SK-N-SH (cell line): ENCODE measurements at regions of chr15 and their contacts with region 1.

Region 1: DNA sequence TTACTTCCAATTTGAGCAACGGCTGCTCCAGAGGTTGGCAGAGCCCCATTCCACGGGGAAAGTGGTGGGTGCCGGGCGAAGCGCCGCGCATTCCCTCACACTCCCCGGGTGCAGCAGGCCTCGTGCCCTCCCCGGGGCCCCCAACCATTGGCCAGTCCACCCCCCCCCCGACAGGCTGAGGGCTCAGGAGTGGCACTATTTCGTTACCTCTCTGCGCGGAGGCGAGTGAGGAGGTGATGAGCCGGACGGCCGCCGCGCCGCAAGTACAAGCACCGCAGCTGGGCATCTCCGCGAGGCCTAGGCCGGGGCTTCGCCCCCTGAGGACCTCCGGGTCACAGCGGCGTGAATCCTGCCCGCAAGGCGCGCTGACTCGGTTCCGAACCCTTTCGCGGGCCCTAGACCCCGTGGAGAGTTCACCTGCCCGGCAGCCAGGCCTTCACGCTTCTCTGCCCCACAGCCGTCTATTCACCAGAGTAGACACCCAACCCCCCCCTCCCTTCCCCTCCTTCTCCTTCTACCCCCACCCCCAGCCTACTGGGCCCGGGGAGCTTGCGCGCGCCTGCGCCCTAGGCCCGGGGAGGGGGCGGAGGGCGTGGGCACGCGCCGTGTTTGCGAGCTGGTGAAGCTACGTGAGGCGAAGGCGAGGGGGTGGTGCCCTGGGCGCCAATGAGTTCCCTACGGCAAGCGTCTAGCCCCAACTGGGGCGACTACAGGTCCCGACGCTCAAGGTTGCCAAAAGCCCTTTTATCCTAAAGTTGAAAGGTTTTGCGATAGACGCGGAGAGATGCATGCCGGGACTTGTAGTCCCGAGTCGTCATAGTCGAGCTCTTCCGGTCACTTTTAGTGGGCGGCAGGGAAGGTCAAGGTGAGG is at the start of gene CLPX:
- DNase-seq: peak; percentile 98
- H3K4me3 ChIP-seq: peak within 1 kb of the TSS; percentile 77 to 87
- H3K27ac ChIP-seq: peak within 1 kb of the TSS; percentile 78 to 89
- H3K4me1 ChIP-seq: peaks cover 0 to 5% of the 10 kb centered on the region in 2 experiments; a peak in 2 of 4 replicates
- H3K27me3 ChIP-seq: no peaks in the 10 kb centered on the region
- CTCF ChIP-seq: no peak
- EP300 ChIP-seq: no peak
- RAD21 ChIP-seq: no peak
- polyA plus RNA-seq, gene CLPX: 12.9 and 17.3 TPM in 2 replicates

Region 2: DNA sequence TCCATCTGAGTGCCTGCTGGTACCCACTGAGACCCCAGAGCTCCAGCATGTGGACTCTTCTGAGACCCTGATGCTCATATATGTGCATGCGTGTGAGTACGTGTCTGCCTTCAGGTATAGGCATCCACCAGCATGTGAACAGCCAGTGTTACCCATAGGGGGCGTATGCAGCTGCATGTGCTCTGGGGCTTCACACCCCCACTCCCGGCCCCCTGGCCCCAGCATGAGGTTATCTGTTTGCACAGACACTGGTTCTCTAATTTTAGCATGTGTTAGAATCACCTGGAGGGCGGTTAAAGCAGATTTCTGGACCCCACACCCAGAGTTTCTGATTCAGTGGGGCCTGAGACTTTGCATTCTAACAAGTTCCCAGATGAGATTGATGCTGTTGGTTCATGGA is 27.0 kb after region 1 on chr15:
- CTCF ChIA-PET with region 1: interaction called, 15 read pairs
- POLR2A ChIA-PET with region 1: interaction called, 3 read pairs
- DNase-seq: peak; percentile 52
- H3K4me3 ChIP-seq: no peak overlapping the region; a peak in 1 of 4 replicates
- H3K27ac ChIP-seq: no peak overlapping the region
- H3K4me1 ChIP-seq: peaks cover 9 to 38% of the 10 kb centered on the region in 2 experiments; a peak in 2 of 4 replicates
- H3K27me3 ChIP-seq: no peaks in the 10 kb centered on the region
- CTCF ChIP-seq: peak; percentile 54
- EP300 ChIP-seq: no peak
- RAD21 ChIP-seq: no peak

Region 3: DNA sequence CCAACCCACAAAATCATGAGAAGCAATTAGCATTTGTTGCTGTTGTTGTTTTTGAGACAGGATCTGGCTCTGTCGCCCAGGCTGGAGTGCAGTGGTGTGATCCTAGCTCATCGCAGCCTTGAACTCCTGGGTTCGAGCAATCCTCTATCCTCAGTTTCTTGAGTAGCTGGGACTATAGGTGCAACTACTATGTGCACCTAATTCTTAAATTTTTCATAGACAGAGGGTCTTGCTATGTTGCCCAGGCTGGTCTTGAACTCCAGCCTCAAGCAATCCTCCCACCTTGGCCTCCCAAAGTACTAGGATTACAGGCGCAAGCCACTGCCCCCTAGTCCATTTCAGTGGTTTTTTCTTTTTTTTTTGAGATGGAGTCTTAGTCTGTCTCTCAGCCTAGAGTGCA is 83.3 kb after region 1 on chr15:
- CTCF ChIA-PET with region 1: interaction called, 63 read pairs
- POLR2A ChIA-PET with region 1: no interaction called
- DNase-seq: no peak
- H3K4me3 ChIP-seq: no peak overlapping the region
- H3K27ac ChIP-seq: no peak overlapping the region
- H3K4me1 ChIP-seq: no peaks in the 10 kb centered on the region; a peak in 1 of 4 replicates
- H3K27me3 ChIP-seq: no peaks in the 10 kb centered on the region
- CTCF ChIP-seq: no peak
- EP300 ChIP-seq: no peak
- RAD21 ChIP-seq: no peak

Region 4: DNA sequence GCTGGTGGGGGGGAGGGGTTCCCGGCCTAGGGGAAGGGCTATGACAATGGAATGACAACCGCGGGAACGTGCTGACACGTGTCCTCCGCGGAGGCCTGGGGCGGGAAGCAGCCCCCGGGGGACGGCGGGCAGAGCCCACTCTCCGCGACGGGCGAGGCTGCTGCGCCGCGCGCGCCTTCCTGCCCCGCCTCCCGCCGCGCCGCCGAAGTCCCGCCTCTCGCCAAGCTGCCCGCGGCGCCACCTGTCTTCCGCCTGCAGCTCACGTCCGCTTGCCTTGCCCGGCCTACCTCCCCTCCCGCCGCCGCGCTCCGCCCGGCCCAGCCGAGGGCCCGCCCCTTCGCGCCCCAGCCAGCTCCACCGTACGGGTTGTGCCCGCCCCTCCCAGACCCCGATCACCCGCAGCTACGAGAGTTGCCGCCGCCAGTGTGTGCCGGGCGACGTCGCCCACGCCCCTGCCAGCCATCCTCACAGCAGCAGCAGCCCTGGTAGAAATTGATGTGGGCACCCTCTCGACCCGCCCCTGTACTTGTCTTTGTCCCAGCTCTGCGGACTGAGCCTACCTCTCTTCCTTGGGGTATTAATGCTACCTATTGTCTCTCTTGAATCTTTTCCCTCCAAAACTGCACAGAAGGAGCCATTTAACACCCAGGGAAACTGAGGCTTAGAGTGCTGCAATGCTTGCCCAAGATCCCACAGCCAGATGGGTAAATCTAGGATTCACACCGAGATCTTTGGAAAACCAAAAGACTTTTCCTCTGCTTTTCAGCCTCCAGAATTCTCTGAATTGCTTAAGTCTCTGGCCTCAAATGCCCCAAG is 101.8 kb after region 1 on chr15 and contains the start of gene PARP16:
- CTCF ChIA-PET with region 1: interaction called, 11 read pairs
- POLR2A ChIA-PET with region 1: interaction called, 20 read pairs
- DNase-seq: peak; percentile 95
- H3K4me3 ChIP-seq: peak within 1 kb of the TSS; percentile 61 to 71
- H3K27ac ChIP-seq: peak within 1 kb of the TSS; percentile 37 to 81; a peak in 3 of 4 replicates
- H3K4me1 ChIP-seq: peaks cover 9 to 13% of the 10 kb centered on the region in 2 experiments; a peak in 3 of 4 replicates
- H3K27me3 ChIP-seq: no peaks in the 10 kb centered on the region
- CTCF ChIP-seq: peak; percentile 24
- EP300 ChIP-seq: no peak; a peak in 1 of 4 replicates
- RAD21 ChIP-seq: no peak
- polyA plus RNA-seq, gene PARP16: 6.3 and 6.5 TPM in 2 replicates

Region 5: DNA sequence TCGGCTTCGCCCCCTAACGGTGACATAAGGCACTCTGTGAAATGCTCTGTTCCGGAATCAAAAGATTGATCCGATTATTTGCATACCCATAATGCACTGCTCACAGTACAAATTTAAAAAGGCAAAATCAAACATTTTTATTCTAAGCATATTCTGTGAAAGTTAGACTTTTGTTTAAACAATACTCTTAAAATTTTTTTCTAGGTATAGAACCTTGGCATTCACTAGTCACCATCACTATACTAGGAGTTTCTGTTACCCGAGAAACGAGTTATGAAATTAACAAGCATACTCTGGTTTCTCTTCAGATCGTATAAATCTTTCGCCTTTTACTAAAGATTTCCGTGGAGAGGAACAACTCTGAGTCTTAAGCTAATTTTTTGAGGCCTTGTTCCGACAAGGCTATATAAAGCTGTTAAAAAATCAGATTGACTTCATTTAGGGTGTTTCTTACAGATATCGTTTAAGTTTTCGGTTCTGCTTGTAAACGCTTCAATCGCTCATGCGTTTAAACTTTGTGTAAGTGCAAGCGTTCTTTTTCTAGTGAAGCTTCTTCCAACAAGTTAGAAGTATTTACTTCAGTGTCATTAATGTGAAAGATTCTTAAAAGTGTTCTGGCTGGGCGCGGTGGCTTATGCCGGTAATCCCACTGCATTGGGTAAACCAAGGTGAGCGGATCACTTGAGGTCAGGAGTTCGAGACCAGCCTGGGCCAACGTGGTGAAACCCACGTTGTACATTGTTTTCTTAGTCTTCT is 119.5 kb after region 1 on chr15 and contains the start of gene RNU5B-1:
- CTCF ChIA-PET with region 1: interaction called, 72 read pairs
- POLR2A ChIA-PET with region 1: interaction called, 23 read pairs
- DNase-seq: peak; percentile 81
- H3K4me3 ChIP-seq: peak within 1 kb of the TSS; percentile 44 to 56
- H3K27ac ChIP-seq: peak within 1 kb of the TSS; percentile 89 to 95
- H3K4me1 ChIP-seq: peaks cover 8 to 10% of the 10 kb centered on the region in 2 experiments; a peak in 2 of 4 replicates
- H3K27me3 ChIP-seq: no peaks in the 10 kb centered on the region
- CTCF ChIP-seq: peak; percentile 87
- EP300 ChIP-seq: peak; percentile 27 to 81; a peak in 3 of 4 replicates
- RAD21 ChIP-seq: no peak; the same call in 1 of the 2 replicates
- polyA plus RNA-seq, gene RNU5B-1: not detected in 2 replicates